Right cardiac atrium (tissue), 5 donors: ENCODE measurements at regions of chrX and their contacts with region 1.

Region 1: DNA sequence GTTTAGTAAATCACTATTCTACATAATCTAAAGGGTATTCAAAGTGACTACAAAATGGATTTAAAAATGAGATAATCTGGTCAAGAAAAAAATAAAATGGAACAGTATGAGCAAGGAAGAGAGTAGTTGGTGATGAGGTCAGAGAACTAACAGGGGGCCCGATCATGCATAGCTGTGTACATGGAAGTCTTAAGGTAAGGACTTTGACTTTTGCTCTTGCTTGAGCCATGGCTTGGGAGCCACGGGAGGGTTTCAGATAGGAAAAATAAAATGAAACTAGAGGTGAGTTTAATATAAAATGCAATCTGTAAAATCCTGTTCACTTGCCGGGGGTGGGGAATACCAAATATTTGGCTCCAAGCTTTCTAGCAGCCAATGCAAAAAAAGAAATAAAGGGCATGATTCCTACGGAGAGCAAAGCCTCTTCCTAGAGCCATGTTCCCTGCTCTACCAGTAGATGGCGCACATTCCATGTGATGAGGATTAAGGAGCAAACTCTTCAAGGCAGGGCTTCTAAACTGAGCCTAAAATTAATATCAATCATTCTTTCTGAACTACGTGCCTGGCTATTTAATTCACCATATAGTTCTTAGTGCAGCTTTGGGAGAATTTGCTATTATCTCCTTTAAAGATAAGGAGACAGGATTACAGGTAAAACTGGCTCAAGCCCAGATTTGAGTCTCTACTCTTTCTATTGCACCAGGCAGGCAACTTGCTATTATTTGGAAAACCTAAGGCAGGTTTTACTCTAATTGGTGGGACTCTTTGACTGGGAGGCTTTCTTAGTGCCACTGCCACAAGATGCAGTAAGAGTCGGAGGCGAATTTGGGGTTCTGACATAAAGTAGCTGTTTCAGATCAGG is 6.8 kb upstream of the CLCN5 start:
- DNase-seq: no peak
- ATAC-seq: peak in 1 of 2 donors; percentile 66
- H3K4me3 ChIP-seq: no peak overlapping the region
- H3K27ac ChIP-seq: no peak overlapping the region
- H3K4me1 ChIP-seq: no peaks in the 10 kb centered on the region
- H3K27me3 ChIP-seq: no peaks in the 10 kb centered on the region

Region 2: GRCh38 chrX:50081282-50081889 is 165.8 kb after region 1 on chrX:
- intact Hi-C with region 1: loop called in 2 of 4 experiments (anchors 5 to 10 kb)
- DNase-seq: peak in 2 of 3 donors; percentile 48 to 71
- ATAC-seq: peak in 1 of 2 donors; percentile 45
- H3K4me3 ChIP-seq: no peak overlapping the region
- H3K27ac ChIP-seq: no peak overlapping the region
- H3K4me1 ChIP-seq: no peaks in the 10 kb centered on the region
- H3K27me3 ChIP-seq: no peaks in the 10 kb centered on the region